ENCODE measurements at regions of chr12 and their contacts with region 1.

Region 1: DNA sequence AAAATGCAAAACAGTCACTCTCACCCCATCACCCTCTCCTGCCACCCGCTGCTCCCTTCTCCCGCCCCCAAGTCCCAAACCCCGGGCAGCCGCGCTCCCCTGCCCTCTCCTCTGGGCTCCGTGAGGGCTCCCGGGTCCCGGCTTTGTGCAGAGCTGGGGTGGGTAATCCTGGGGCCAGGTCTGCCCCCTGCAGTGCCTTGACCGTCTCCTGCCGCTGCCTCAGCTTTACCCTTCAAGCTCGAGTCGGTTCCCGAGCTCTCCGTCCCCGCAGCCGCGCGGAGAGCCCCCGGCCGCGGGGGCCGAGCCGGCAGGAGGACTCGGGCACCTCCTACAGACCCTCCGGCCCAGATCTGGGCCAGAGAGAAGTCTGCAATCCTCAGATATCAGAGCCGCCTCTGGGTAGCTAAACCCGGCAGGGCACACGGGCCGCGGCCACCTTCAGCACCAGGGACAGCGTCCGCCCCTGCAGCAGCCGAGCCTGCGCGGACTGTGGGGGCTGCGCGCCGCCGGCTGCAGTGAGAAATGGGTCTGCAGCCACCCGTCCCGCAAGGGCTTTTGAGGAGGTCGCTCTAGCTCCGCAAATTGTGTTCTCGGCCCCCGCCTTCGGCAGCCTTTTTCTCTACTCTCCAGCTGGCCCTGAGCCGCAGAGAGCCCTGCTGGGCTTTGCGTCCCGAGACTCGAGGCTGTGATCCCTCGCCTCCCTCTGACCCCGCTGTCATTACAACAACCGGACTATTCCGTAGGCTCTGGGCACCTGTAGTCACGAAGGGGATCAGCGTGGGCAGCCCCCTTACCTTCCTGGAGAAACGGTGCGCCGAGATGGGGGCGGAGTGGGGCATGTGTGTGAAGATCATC is 1.2 kb downstream of the PRMT8 start:
- ATAC-seq: peak; percentile 67 to 99 (median 72)
- H3K4me3 ChIP-seq: peak overlapping the region; percentile 60 to 88 (median 62)
- H3K27ac ChIP-seq: peak overlapping the region; percentile 46 to 53
- H3K4me1 ChIP-seq: peaks cover 16 to 20% of the 10 kb centered on the region in 2 donors

Region 2: GRCh38 chr12:3416154-3416553 is 76.0 kb before region 1 on chr12:
- in situ Hi-C with region 1: no loop called
- ATAC-seq: no peak
- H3K4me3 ChIP-seq: no peak overlapping the region
- H3K27ac ChIP-seq: no peak overlapping the region
- H3K4me1 ChIP-seq: no peaks in the 10 kb centered on the region

Region 3: GRCh38 chr12:3658327-3659163 is 166.4 kb after region 1 on chr12:
- in situ Hi-C with region 1: loop called in 1 of 9 experiments (anchors 25 kb)
- ATAC-seq: peak in 2 of 8 experiments; percentile 58 to 74
- H3K4me3 ChIP-seq: no peak overlapping the region
- H3K27ac ChIP-seq: no peak overlapping the region
- H3K4me1 ChIP-seq: peaks cover 63% of the 10 kb centered on the region in 2 donors